A673 (cell line): ENCODE measurements at regions of chr5 and their contacts with region 1.

Region 1: GRCh38 chr5:151363673-151364072 is 16.3 kb upstream of the SLC36A2 start:
- DNase-seq: no peak
- H3K4me3 ChIP-seq: no peak overlapping the region
- H3K27ac ChIP-seq: no peak overlapping the region
- H3K4me1 ChIP-seq: no peaks in the 10 kb centered on the region
- H3K27me3 ChIP-seq: no peaks in the 10 kb centered on the region
- CTCF ChIP-seq: no peak

Region 2: DNA sequence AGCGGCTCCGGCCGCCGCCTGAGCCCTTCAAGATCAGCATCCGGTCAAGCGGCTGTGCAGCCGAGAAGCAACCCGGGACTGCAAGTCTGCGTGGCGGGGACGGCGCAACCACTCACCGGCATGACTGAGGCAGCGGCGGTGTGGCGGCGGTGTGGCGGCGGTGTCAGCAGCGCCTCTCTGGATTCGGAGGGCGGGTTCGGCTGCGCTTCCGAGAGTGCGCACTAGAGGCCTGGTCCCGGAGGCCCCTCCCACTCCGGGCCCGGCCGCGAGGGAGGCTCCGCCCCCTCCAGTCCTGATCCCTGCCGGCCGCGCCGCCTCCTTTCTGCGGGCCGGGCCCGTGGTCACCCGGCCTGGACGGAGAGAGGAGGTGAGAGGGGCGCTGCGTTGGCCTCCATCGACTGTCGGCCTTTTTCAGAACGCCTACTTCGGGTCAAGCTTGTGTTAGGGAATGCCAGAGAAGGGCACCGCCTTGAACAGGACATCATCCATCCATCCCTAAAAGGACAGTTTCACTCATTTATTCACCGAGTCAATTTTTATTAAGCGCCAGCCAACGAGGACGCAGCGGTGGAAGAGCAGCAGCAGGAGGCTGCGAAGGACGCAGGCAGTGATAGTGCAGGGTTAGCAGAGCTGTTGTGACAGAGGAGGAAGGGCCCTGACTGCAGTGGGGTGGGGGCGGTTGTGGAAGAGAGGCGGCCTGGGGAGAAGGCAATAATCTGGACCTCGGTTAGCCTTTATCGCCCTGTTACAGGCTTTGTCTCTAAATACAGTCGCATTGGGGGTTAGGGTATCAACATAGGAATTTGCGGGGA is 395.0 kb after region 1 on chr5 and contains the start of gene ATOX1:
- CTCF ChIA-PET with region 1: no interaction called
- POLR2A ChIA-PET with region 1: interaction called, 10 read pairs
- intact Hi-C with region 1: no loop called
- DNase-seq: peak; percentile 91
- H3K4me3 ChIP-seq: peak within 1 kb of the TSS; percentile 86
- H3K27ac ChIP-seq: peak within 1 kb of the TSS; percentile 77
- H3K4me1 ChIP-seq: peaks cover 4% of the 10 kb centered on the region
- H3K27me3 ChIP-seq: no peaks in the 10 kb centered on the region
- CTCF ChIP-seq: no peak
- total RNA-seq, gene ATOX1: 65.6 and 72.2 TPM in 2 replicates

Region 3: DNA sequence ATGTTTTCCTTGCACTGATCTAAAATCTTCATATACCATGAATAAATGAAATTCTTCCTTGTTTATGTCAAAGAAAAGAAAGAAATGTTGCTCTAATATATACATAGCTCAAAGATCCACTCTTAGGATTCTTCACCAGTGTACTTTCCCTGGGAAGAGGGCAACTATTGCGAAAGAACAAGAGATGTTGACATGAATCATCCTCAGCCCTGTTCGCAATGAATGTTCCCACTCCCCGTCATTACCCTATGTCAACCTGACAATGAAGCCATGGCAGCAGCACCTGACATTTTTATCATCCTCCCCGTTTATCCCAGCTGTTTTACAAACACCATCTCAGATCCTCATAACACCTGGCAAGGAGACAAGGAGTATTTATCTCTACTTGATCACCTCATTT is 1717.7 kb after region 1 on chr5:
- CTCF ChIA-PET with region 1: no interaction called
- POLR2A ChIA-PET with region 1: no interaction called
- intact Hi-C with region 1: no loop called
- DNase-seq: no peak
- H3K4me3 ChIP-seq: no peak overlapping the region
- H3K27ac ChIP-seq: no peak overlapping the region
- H3K4me1 ChIP-seq: no peaks in the 10 kb centered on the region
- H3K27me3 ChIP-seq: no peaks in the 10 kb centered on the region
- CTCF ChIP-seq: no peak